Activated naive CD4-positive, alpha-beta T cell treated with anti-CD3 and anti-CD28 coated beads for 36 hours (primary cell): ENCODE measurements at regions of chr10 and their contacts with region 1.

Region 1: DNA sequence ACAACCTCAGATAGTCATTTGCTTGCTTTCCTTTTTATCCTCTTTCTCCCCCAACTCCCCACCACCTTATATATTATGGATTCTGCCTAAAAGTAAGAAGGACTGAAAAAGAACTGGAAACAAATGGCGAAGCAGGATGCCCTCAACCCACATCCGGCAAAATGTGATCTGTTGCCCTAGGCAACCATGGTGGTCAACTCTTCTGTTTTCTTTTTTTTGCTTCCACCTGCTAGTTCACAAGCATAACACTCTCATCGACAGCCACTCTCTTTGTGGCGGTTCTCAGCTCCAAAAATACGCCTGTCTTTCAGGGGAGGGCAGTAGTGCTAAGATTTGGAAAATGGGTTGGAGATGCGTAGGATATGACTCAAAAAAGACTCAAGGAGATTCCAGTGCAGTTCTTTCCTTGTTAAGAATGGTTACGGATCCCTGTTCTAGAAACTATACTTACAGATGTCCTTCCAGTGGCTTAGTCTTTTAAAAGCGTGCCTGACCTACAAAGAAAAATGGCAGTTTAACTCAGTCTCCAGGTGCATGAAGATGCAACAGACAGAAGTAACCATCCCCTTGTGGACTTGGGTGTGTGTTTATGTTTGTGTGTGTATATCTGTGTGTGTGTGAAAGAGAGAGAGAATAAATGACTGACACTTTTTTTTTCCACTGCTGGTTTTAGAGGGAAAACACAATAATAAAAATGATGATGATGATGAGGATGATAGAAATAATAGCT is 10.7 kb downstream of the APBB1IP start:
- DNase-seq: peak; percentile 85
- H3K4me3 Mint-ChIP-seq: peak overlapping the region; percentile 54
- H3K27ac Mint-ChIP-seq: peak overlapping the region; percentile 88
- H3K4me1 Mint-ChIP-seq: peaks cover 87% of the 10 kb centered on the region
- H3K27me3 Mint-ChIP-seq: no peaks in the 10 kb centered on the region

Region 2: DNA sequence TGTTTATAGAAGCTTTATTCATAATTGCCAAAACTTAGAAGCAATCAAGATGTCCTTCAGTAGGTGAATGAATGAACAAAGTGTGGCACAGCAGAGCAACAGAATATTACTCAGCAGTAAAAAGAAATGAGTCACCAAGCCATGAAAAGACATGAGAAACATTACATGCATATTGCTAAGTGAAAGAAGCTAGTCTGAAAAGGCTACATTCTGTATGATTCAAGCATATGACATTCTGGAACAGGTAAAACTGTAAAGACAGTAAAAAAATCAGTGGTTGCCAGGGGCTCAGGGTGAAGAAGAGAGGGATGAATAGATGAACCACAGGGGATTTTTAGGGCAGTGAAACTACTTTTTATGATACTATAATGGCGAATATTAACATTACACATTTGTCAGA is 91.7 kb before region 1 on chr10:
- CTCF ChIA-PET with region 1: no interaction called
- intact Hi-C with region 1: loop called (anchors 1 kb)
- DNase-seq: peak; percentile 32
- H3K4me3 Mint-ChIP-seq: no peak overlapping the region
- H3K27ac Mint-ChIP-seq: no peak overlapping the region
- H3K4me1 Mint-ChIP-seq: peaks cover 13% of the 10 kb centered on the region
- H3K27me3 Mint-ChIP-seq: no peaks in the 10 kb centered on the region

Region 3: DNA sequence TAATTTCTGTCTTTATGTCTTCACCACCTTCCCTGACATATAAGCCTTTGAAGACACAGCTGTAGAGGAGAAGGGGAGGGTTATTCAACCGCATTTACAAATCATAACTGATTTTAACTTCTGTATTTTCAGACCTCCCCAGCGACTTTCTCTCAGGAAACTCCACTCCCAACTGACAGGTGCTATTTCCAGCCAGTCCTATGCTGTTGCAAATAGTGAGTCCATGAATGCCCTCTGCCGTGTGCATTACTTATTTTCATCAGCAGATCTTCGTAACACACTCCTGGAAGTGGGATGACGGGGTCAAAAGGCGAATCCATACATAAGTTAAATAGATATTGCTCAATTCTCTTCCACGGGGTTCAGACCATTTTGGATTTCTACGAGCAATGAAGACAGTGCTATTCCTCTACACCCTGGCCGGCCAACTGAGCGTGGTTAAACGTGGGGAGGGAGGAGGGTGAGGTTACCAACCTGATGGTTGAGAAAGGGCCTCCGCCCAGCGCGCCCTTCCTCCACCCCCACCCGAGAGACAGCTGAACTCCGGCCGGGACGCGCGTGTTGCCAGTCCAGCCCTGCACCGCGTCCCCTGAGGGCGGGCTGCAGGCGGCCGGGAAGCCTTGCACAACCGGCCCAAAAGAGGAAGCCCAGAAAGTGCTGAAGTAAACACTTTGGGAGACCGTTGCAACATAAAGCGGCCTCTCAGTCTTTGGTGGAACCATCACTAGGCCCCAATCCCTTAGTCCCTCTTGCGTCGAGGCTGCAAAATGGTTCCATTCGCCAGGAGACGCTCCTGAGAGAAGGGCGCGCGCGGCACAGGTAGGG is 11.0 kb before region 1 on chr10 and contains the start of gene APBB1IP:
- CTCF ChIA-PET with region 1: interaction called, 3 read pairs
- intact Hi-C with region 1: loop called (anchors 1 kb)
- DNase-seq: peak; percentile 58
- H3K4me3 Mint-ChIP-seq: peak within 1 kb of the TSS; percentile 81
- H3K27ac Mint-ChIP-seq: peak within 1 kb of the TSS; percentile 98
- H3K4me1 Mint-ChIP-seq: peaks cover 50% of the 10 kb centered on the region
- H3K27me3 Mint-ChIP-seq: no peaks in the 10 kb centered on the region
- total RNA-seq, gene APBB1IP: 29.4 to 30.9 TPM

Region 4: DNA sequence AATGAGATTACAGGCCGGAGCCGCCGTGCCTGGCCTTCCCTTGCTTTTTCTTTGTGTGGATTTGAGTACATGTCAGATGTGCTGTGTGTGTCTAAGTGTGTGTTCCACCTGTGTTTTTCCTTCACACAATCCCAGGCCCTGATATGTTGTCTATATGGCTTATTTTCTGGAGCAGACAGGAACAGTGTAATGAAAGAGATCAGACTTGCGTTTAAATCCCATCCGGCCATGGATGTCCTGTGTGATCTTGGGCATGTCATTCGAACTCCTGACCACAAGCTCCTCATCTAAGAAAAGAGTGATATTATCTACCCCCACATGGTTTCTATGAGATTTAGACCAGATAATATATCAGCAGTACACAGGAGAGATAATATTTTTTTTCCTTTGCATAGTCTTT is 26.5 kb after region 1 on chr10:
- CTCF ChIA-PET with region 1: interaction called, 5 read pairs
- intact Hi-C with region 1: loop called (anchors 1 kb)
- DNase-seq: no peak
- H3K4me3 Mint-ChIP-seq: peak overlapping the region; percentile 30
- H3K27ac Mint-ChIP-seq: peak overlapping the region; percentile 89
- H3K4me1 Mint-ChIP-seq: peaks cover 76% of the 10 kb centered on the region
- H3K27me3 Mint-ChIP-seq: no peaks in the 10 kb centered on the region

Region 5: GRCh38 chr10:26737730-26738129 is 288.9 kb after region 1 on chr10:
- CTCF ChIA-PET with region 1: no interaction called
- intact Hi-C with region 1: loop called (anchors 5 kb)
- DNase-seq: peak; percentile 75
- H3K4me3 Mint-ChIP-seq: no peak overlapping the region
- H3K27ac Mint-ChIP-seq: peak overlapping the region; percentile 88
- H3K4me1 Mint-ChIP-seq: peaks cover 36% of the 10 kb centered on the region
- H3K27me3 Mint-ChIP-seq: no peaks in the 10 kb centered on the region